ENCODE measurements at regions of chr17 and their contacts with region 1.

Region 1: DNA sequence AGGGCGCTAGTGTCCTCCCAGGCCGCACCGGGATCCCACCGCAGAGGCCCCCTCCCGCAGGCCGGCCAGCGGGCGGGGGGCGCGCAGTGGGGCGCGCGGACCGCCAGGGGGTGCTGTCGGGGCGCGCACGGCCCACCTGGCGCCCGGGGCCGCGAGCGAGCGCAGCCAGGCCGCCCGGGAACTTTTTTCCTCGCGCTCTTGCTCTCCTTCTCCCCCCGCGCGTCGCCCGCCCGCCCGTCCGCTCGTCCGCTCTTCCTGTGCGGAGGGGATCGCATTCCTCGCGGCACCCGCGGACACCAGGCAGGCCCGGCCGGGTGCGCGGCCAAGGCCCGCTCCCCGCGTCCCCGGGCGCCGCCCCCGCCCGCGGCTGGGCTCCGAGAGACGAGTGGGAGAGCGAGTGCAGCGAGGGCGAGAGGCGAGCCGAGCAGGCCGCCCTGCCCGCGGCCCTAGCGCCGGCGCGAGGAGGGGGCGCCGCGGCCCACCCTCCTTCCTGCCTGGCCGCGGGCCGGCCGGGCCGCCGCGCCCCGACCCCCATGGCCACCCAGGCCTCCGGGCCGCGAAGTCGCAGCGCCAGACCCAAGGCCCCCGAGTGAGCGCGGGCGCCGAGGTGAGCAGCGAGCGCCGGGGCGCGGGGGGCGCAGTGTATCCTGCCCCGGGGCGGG is at the start of gene RAI1:
- DNase-seq: peak; percentile 65 to 85
- H3K4me3 ChIP-seq: peak within 1 kb of the TSS; percentile 73
- H3K27ac ChIP-seq: peak within 1 kb of the TSS; percentile 64
- H3K4me1 ChIP-seq: peaks cover 48% of the 10 kb centered on the region
- H3K27me3 ChIP-seq: no peaks in the 10 kb centered on the region
- CTCF ChIP-seq: no peak; the same call in 1 of the 2 replicates
- total RNA-seq, gene RAI1: 86.3 and 92.9 TPM in 2 replicates

Region 2: GRCh38 chr17:17710728-17711541 is 29.6 kb after region 1 on chr17:
- CTCF ChIA-PET with region 1: interaction called, 3 read pairs
- POLR2A ChIA-PET with region 1: interaction called, 6 read pairs
- intact Hi-C with region 1: loop called (anchors 1 kb)
- DNase-seq: peak; percentile 96 to 98
- H3K4me3 ChIP-seq: peak overlapping the region; percentile 33; the same call in 1 of the 2 replicates
- H3K27ac ChIP-seq: peak overlapping the region; percentile 80
- H3K4me1 ChIP-seq: peaks cover 47% of the 10 kb centered on the region
- H3K27me3 ChIP-seq: no peaks in the 10 kb centered on the region
- CTCF ChIP-seq: no peak

Region 3: GRCh38 chr17:17737961-17738894 is 56.9 kb after region 1 on chr17:
- CTCF ChIA-PET with region 1: no interaction called
- POLR2A ChIA-PET with region 1: interaction called, 24 read pairs
- intact Hi-C with region 1: loop called (anchors 1 kb)
- DNase-seq: peak; percentile 68 to 94
- H3K4me3 ChIP-seq: peak overlapping the region; percentile 24; the same call in 1 of the 2 replicates
- H3K27ac ChIP-seq: peak overlapping the region; percentile 77
- H3K4me1 ChIP-seq: peaks cover 53% of the 10 kb centered on the region
- H3K27me3 ChIP-seq: no peaks in the 10 kb centered on the region
- CTCF ChIP-seq: no peak

Region 4: GRCh38 chr17:17783116-17783824 is 102.0 kb after region 1 on chr17:
- CTCF ChIA-PET with region 1: interaction called, 3 read pairs
- POLR2A ChIA-PET with region 1: no interaction called
- intact Hi-C with region 1: loop called (anchors 2 kb)
- DNase-seq: peak in 1 of 2 experiments; percentile 70
- H3K4me3 ChIP-seq: peak overlapping the region; percentile 31; the same call in 1 of the 2 replicates
- H3K27ac ChIP-seq: no peak overlapping the region
- H3K4me1 ChIP-seq: peaks cover 16% of the 10 kb centered on the region
- H3K27me3 ChIP-seq: no peaks in the 10 kb centered on the region
- CTCF ChIP-seq: no peak

Region 5: GRCh38 chr17:17859909-17860765 is 178.8 kb after region 1 on chr17:
- CTCF ChIA-PET with region 1: interaction called, 3 read pairs
- POLR2A ChIA-PET with region 1: no interaction called
- intact Hi-C with region 1: loop called (anchors 1 kb)
- DNase-seq: peak in 1 of 2 experiments; percentile 72
- H3K4me3 ChIP-seq: no peak overlapping the region
- H3K27ac ChIP-seq: no peak overlapping the region
- H3K4me1 ChIP-seq: peaks cover 19% of the 10 kb centered on the region
- H3K27me3 ChIP-seq: no peaks in the 10 kb centered on the region
- CTCF ChIP-seq: peak; percentile 98

Region 6: GRCh38 chr17:18033442-18034099 is 352.3 kb after region 1 on chr17:
- CTCF ChIA-PET with region 1: no interaction called
- POLR2A ChIA-PET with region 1: no interaction called
- intact Hi-C with region 1: loop called (anchors 2 kb)
- DNase-seq: peak; percentile 54 to 82
- H3K4me3 ChIP-seq: no peak overlapping the region
- H3K27ac ChIP-seq: no peak overlapping the region
- H3K4me1 ChIP-seq: peaks cover 30% of the 10 kb centered on the region
- H3K27me3 ChIP-seq: no peaks in the 10 kb centered on the region
- CTCF ChIP-seq: peak; percentile 89

Measured in PC-9 (cell line).